ENCODE measurements at regions of chr9 and their contacts with region 1.

Region 1: GRCh38 chr9:38160613-38161215 is 91.7 kb upstream of the SHB start:
- DNase-seq: peak; percentile 74
- H3K4me3 ChIP-seq: no peak overlapping the region
- H3K27ac ChIP-seq: no peak overlapping the region
- H3K4me1 ChIP-seq: no peaks in the 10 kb centered on the region
- H3K27me3 ChIP-seq: no peaks in the 10 kb centered on the region
- CTCF ChIP-seq: peak; percentile 78 to 88 (median 82)
- EP300 ChIP-seq: no peak
- POLR2A ChIP-seq: no peak

Region 2: DNA sequence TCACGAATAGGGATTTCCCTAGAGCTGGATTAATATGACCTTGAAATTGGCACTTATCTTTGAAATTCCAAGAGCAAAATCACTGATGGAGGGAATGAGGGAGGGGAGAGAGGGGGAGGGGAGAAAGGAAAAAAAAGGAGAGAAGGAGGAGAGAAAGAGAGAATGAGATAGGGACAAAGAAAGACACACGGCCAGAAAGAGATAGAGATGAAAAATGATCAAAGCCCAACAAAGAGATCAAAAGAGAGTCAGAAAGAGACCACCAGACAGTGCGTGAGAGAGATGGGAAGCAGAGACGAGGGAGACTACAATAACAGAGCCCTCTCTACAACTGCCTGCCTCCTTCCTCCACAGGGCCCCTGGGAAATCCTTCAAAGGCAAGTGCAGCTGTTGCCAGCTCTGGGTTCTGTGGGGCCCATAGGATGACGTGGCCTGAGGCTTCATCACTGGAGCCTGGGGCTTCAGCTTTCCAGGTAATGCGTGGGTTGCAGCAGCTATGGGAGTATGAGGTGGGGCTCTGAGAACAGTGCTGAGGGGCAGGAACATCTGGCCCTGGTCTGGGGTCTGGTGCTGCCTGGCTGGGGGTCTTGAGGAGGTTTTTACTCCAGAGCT is 33.3 kb before region 1 on chr9:
- in situ Hi-C with region 1: no loop called
- intact Hi-C with region 1: loop called (anchors 5 kb)
- DNase-seq: no peak
- H3K4me3 ChIP-seq: no peak overlapping the region
- H3K27ac ChIP-seq: no peak overlapping the region
- H3K4me1 ChIP-seq: no peaks in the 10 kb centered on the region
- H3K27me3 ChIP-seq: no peaks in the 10 kb centered on the region
- CTCF ChIP-seq: no peak
- EP300 ChIP-seq: no peak
- POLR2A ChIP-seq: no peak

Region 3: GRCh38 chr9:38362852-38363593 is 202.3 kb after region 1 on chr9:
- in situ Hi-C with region 1: loop called in 1 of 4 experiments (anchors 25 kb)
- intact Hi-C with region 1: no loop called
- DNase-seq: peak; percentile 22
- H3K4me3 ChIP-seq: no peak overlapping the region
- H3K27ac ChIP-seq: no peak overlapping the region
- H3K4me1 ChIP-seq: peaks cover 0 to 7% (median 1%) of the 10 kb centered on the region in 4 donors
- H3K27me3 ChIP-seq: no peaks in the 10 kb centered on the region
- CTCF ChIP-seq: peak; percentile 38 to 55 (median 46)
- EP300 ChIP-seq: no peak
- POLR2A ChIP-seq: no peak

Region 4: DNA sequence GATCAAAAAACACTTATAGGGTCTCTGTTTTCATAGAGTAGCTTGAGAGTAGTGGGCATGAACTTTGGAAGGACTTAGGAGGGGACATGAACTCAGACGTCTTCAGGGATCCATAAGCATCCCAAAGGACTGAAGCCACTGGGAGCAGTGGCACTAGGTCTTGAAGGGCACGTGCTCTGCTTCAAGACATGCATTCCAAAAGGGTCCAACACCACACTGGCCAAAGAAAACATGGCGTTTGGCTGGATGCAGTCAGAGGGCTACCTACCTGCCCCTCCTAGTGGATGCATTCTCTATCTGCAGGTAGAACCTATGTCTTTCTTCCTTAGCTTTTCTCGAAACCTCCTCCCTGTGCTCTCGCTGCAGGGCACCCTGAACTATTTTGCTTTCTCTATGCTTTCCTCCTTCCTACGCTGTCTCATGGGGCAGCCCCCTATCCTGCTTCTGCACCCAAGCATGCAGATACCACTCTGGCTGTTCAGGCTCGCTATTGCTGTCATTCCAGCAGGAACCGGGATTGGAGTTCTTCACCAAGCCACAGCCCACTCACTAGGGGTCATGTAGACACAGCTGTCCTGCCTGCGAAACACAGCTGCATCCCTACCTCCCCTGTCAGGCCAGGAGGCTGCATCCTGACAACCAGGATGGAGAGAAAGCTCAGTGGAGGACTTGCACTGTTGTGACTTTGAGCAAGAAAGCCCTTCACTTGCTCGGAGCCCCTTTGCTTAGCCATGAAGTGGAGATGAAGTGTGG is 547.3 kb after region 1 on chr9:
- in situ Hi-C with region 1: no loop called
- intact Hi-C with region 1: no loop called
- DNase-seq: no peak
- H3K4me3 ChIP-seq: no peak overlapping the region
- H3K27ac ChIP-seq: no peak overlapping the region
- H3K4me1 ChIP-seq: no peaks in the 10 kb centered on the region
- H3K27me3 ChIP-seq: peaks cover 6% of the 10 kb centered on the region
- CTCF ChIP-seq: peak in 4 of 5 experiments; percentile 12 to 28 (median 18)
- EP300 ChIP-seq: no peak
- POLR2A ChIP-seq: no peak

Measured in transverse colon (tissue), 4 donors.